Heart right ventricle (tissue), 16 donors: ENCODE measurements at regions of chr9 and their contacts with region 1.

Region 1: GRCh38 chr9:13557746-13558145 is 278.3 kb upstream of the MPDZ start:
- DNase-seq: no peak
- ATAC-seq: peak; percentile 28 to 95 (median 75)
- H3K4me3 ChIP-seq: no peak overlapping the region
- H3K27ac ChIP-seq: peak overlapping the region in 8 of 10 donors; percentile 26 to 68 (median 54)
- H3K4me1 ChIP-seq: peaks cover 0 to 31% (median 9%) of the 10 kb centered on the region in 9 donors
- H3K27me3 ChIP-seq: no peaks in the 10 kb centered on the region
- CTCF ChIP-seq: no peak

Region 2: GRCh38 chr9:13485068-13485596 is 72.6 kb before region 1 on chr9:
- intact Hi-C with region 1: loop called in 2 of 10 experiments (anchors 5 kb)
- DNase-seq: peak; percentile 30 to 76
- ATAC-seq: peak; percentile 95 to 98 (median 96)
- H3K4me3 ChIP-seq: no peak overlapping the region
- H3K27ac ChIP-seq: peak overlapping the region in 9 of 10 donors; percentile 36 to 82 (median 72)
- H3K4me1 ChIP-seq: peaks cover 0 to 29% (median 14%) of the 10 kb centered on the region in 9 donors
- H3K27me3 ChIP-seq: no peaks in the 10 kb centered on the region
- CTCF ChIP-seq: peak in 2 of 9 donors; percentile 10 to 18

Region 3: GRCh38 chr9:14372437-14373335 is 814.9 kb after region 1 on chr9:
- intact Hi-C with region 1: no loop called
- DNase-seq: peak in 1 of 2 donors; percentile 73
- ATAC-seq: peak; percentile 80 to 98 (median 94)
- H3K4me3 ChIP-seq: no peak overlapping the region
- H3K27ac ChIP-seq: peak overlapping the region in 8 of 10 donors; percentile 42 to 75 (median 56)
- H3K4me1 ChIP-seq: peaks cover 0 to 24% (median 14%) of the 10 kb centered on the region in 9 donors
- H3K27me3 ChIP-seq: no peaks in the 10 kb centered on the region
- CTCF ChIP-seq: no peak